Activated CD8-positive, alpha-beta T cell treated with anti-CD3 and anti-CD28 coated beads, Interleukin-2, amount 10 ng/mL, durations not matched to agents 7 days and 5 days (primary cell): ENCODE measurements at regions of chrX and their contacts with region 1.

Region 1: DNA sequence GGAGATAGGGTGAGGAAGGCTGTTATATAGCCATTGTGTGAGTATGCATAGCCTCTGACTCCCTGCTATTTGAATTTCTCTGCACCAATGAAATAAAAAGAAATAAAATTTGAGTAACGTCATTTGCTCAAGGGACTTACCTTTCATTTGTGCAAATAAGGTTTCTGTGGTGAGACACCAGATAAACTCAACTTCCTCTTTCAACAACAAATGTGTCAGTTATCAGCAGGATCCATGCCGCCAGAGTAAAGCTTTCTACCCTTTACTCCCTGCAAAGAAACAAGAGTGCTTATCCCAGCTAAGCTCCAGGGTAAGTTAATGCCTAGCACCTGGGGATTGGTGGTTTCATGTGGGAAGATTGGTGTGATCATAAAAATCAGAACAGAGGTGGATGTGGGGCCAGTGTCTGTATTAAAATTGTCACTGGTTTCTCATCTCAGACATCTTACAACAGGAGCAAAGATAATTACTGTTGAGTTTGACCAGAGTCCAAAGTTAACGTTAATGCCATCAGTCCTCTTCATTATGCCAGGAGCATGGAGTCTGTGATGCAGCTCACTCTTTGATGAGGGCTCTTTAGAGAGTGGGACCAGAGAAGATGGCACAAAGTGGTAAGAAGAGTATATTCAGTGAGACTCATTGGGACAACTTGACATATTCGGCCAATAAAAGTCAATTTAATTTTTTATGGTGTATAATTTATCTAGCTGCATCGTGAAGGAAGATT is at the start of gene P2RY10:
- DNase-seq: peak; percentile 42
- ATAC-seq: peak; percentile 85
- H3K4me3 Mint-ChIP-seq: peak within 1 kb of the TSS; percentile 97
- H3K27ac Mint-ChIP-seq: peak within 1 kb of the TSS; percentile 98
- H3K4me1 Mint-ChIP-seq: peaks cover 50% of the 10 kb centered on the region
- H3K27me3 Mint-ChIP-seq: no peaks in the 10 kb centered on the region
- total RNA-seq, gene P2RY10: 48.8 to 49.8 TPM

Region 2: GRCh38 chrX:78910010-78910409 is 35.3 kb before region 1 on chrX:
- CTCF ChIA-PET with region 1: no interaction called
- POLR2A ChIA-PET with region 1: no interaction called
- DNase-seq: no peak
- ATAC-seq: no peak
- H3K4me3 Mint-ChIP-seq: no peak overlapping the region
- H3K27ac Mint-ChIP-seq: no peak overlapping the region
- H3K4me1 Mint-ChIP-seq: no peaks in the 10 kb centered on the region
- H3K27me3 Mint-ChIP-seq: no peaks in the 10 kb centered on the region

Region 3: DNA sequence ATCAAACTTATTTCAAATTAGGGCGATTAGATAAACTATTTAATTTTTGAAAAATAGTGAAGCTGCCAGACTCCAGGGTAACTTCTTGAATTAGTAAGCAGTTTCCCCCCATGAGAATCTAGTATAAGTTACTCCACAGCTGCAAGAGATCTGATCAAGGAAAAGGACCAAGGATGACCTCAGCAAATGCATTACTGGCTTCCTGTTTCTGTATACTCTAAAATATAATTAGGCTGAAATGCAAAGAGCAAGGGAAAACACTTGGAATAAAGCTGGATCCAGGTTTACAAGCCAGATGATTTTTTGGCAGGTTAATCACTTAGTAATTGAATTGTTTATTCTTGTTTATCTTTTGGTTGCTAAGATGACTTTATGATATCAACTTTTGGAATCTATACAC is 13.5 kb before region 1 on chrX:
- CTCF ChIA-PET with region 1: no interaction called
- POLR2A ChIA-PET with region 1: no interaction called
- DNase-seq: no peak
- ATAC-seq: no peak
- H3K4me3 Mint-ChIP-seq: no peak overlapping the region
- H3K27ac Mint-ChIP-seq: no peak overlapping the region
- H3K4me1 Mint-ChIP-seq: no peaks in the 10 kb centered on the region
- H3K27me3 Mint-ChIP-seq: no peaks in the 10 kb centered on the region

Region 4: DNA sequence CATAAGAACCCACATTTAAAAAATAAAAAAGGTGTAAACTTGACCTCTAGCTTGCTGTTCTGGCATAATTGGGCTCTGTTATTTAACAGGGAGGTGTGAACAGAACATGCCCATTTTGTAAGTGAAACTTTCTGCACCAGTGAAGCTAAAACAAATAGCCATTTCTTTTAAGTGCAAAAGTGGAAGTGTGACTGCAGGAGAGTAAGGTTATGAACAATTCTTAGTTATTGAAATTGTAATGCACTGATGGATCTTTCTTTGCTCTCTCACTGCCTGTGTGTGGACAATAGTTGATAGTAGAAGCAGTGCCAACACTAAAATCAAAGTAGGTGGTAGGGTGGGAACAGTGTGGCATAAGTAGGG is 12.4 kb after region 1 on chrX:
- CTCF ChIA-PET with region 1: interaction called, 3 read pairs
- POLR2A ChIA-PET with region 1: interaction called, 10 read pairs
- DNase-seq: no peak
- ATAC-seq: no peak
- H3K4me3 Mint-ChIP-seq: no peak overlapping the region
- H3K27ac Mint-ChIP-seq: no peak overlapping the region
- H3K4me1 Mint-ChIP-seq: peaks cover 46% of the 10 kb centered on the region
- H3K27me3 Mint-ChIP-seq: no peaks in the 10 kb centered on the region

Region 5: GRCh38 chrX:78979789-78980464 is 34.6 kb after region 1 on chrX:
- CTCF ChIA-PET with region 1: no interaction called
- POLR2A ChIA-PET with region 1: no interaction called
- DNase-seq: no peak
- ATAC-seq: peak; percentile 42
- H3K4me3 Mint-ChIP-seq: no peak overlapping the region
- H3K27ac Mint-ChIP-seq: no peak overlapping the region
- H3K4me1 Mint-ChIP-seq: peaks cover 9% of the 10 kb centered on the region
- H3K27me3 Mint-ChIP-seq: no peaks in the 10 kb centered on the region

Region 6: DNA sequence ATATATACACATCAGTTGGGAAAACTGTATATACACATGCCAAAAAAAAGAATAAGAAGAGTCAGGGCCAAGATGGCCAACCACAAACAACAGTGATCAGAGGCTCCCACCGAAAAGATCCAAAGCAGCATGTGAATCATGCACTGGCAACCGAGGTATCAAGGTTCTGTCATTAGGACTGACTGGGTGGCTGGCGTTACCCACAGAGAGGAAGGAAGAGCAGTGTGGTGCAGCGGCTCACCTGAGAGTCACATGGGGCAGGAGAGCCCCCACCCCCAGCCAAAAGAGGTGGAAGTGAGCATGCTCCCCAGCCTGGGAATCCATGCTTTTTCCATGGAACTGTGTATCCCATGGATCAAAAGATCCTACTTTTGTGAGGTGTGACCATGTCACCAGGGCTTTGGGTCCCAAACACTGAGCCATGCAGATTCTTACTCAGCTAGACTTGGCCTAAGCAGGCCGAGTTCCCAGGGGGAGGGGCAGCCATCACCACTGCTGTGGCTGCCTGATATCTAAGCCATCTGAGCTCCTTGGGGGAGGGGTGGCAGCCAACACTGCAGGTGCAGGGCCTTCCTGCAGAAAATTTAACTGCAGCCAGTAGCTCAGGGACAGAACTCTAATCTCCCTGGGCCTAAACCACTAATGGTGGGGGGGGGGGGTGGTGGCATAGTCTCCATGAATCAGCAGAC is 52.7 kb after region 1 on chrX:
- CTCF ChIA-PET with region 1: no interaction called
- POLR2A ChIA-PET with region 1: no interaction called
- DNase-seq: peak; percentile 49
- ATAC-seq: no peak
- H3K4me3 Mint-ChIP-seq: no peak overlapping the region
- H3K27ac Mint-ChIP-seq: no peak overlapping the region
- H3K4me1 Mint-ChIP-seq: peaks cover 13% of the 10 kb centered on the region
- H3K27me3 Mint-ChIP-seq: no peaks in the 10 kb centered on the region

Region 7: GRCh38 chrX:79081895-79082512 is 136.7 kb after region 1 on chrX:
- CTCF ChIA-PET with region 1: interaction called, 13 read pairs
- POLR2A ChIA-PET with region 1: interaction called, 3 read pairs
- DNase-seq: peak; percentile 49
- ATAC-seq: peak; percentile 73
- H3K4me3 Mint-ChIP-seq: peak overlapping the region; percentile 70
- H3K27ac Mint-ChIP-seq: peak overlapping the region; percentile 71
- H3K4me1 Mint-ChIP-seq: peaks cover 31% of the 10 kb centered on the region
- H3K27me3 Mint-ChIP-seq: no peaks in the 10 kb centered on the region